Calu3 (cell line): ENCODE measurements at regions of chr2 and their contacts with region 1.

Region 1: DNA sequence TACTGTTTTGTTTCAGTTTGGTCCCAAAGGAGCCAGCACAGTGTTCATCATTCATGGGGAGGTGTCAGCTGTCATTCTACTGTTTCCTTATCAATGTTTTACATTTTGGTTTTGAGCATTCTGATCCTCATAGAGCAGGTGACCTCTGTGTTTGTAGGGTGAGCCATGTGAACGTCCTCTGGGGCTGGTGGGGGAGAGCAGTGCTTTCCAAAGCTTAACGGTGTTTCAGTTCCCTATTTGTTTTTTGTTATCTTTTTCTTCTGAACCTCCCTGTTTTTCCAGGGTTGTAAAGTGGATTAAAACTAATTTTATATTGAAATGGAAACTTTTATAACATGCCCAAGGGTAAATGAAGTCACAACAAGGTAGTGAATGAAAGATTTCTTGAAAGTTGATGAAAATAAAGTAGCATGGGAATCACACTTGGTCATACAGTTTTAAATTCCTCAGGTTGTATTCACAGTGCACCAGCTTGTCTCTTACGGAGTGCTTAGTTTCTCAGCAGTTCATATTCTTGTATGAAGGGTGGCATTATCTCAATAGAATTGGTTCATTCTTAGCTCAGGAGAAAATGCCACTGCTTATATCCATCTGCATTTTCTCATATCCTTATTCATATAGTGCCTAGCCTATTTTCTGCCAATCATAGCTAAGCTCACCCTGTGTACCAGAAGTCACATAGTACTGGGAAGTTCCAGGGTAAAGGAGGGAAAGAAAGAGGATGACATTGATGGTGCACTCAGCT is 54.5 kb downstream of the MAP4K4 start:
- DNase-seq: no peak
- H3K4me3 Mint-ChIP-seq: peak overlapping the region; percentile 37
- H3K27ac Mint-ChIP-seq: peak overlapping the region; percentile 70
- H3K4me1 Mint-ChIP-seq: peaks cover 77% of the 10 kb centered on the region
- H3K27me3 Mint-ChIP-seq: no peaks in the 10 kb centered on the region
- CTCF ChIP-seq: no peak

Region 2: DNA sequence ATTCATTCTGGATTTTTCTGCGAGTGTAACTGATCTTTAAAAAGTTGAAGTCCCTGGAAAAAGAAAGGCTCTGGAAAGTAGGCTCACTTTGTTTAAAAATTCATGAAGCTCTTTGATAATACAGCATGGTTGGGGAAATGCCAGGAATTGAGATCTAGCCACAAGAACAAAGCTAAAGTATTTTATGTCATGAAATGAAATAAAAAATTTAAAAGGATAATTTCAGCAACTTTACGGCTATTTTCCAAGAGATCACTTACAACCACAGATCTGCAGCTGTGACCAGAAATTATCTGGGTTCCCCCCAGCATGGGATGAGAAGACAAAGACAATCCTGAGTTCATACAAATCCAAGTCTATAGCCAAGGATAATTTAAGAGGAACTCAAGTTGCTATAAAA is 251.9 kb before region 1 on chr2:
- CTCF ChIA-PET with region 1: no interaction called
- intact Hi-C with region 1: no loop called
- DNase-seq: no peak
- H3K4me3 Mint-ChIP-seq: no peak overlapping the region
- H3K27ac Mint-ChIP-seq: no peak overlapping the region
- H3K4me1 Mint-ChIP-seq: peaks cover 8% of the 10 kb centered on the region
- H3K27me3 Mint-ChIP-seq: no peaks in the 10 kb centered on the region
- CTCF ChIP-seq: no peak

Region 3: DNA sequence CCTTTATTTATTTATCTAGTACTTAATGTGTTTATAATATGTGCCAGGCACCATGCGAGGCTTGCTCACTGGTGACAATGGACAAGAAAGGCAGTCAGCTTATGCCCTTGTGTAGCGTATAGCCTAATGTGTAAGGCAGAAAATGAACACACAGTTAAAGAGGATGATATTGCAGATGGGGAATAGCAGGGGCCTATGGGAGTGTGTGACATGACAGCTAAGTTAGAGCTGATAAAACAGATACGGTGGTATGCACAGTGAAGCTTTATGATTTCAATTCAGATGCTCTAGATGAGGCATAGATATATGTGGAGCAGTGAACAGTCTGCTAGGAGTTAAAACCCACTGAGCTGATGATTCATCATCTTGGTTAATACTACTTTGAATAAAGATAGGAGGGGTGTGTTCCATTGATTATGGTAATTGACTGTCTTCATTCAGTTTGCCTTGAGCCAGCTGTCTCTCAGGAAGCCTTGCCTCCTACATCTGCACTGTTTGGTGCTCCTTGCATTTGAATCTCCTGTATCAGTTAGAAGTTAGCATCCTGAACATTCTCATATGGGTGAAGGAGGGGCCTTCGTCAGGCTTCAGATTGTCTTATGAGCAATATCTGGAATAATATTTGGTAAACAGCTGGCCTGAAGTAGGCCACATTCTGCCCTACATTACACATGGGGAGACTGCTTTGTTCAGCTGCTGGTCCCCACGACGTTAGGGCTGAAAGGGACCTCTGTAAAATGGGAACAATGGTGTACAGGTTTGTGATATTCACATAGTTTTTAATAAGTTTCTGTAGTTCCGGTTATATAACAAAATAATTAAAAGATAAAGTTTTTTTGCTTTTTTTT is 41.4 kb before region 1 on chr2:
- CTCF ChIA-PET with region 1: interaction called, 3 read pairs
- intact Hi-C with region 1: loop called (anchors 5 kb)
- DNase-seq: no peak
- H3K4me3 Mint-ChIP-seq: peak overlapping the region; percentile 32
- H3K27ac Mint-ChIP-seq: peak overlapping the region; percentile 50
- H3K4me1 Mint-ChIP-seq: peaks cover 53% of the 10 kb centered on the region
- H3K27me3 Mint-ChIP-seq: no peaks in the 10 kb centered on the region
- CTCF ChIP-seq: no peak